ENCODE measurements at regions of chr1 and their contacts with region 1.

Region 1: GRCh38 chr1:114282751-114283403 is 129.2 kb upstream of the SYT6 start:
- DNase-seq: peak; percentile 92
- ATAC-seq: peak; percentile 98
- H3K4me3 Mint-ChIP-seq: no peak overlapping the region
- H3K27ac Mint-ChIP-seq: no peak overlapping the region
- H3K4me1 Mint-ChIP-seq: peaks cover 11% of the 10 kb centered on the region
- H3K27me3 Mint-ChIP-seq: no peaks in the 10 kb centered on the region
- CTCF ChIP-seq: peak; percentile 83

Region 2: GRCh38 chr1:113804421-113805255 is 478.2 kb before region 1 on chr1:
- CTCF ChIA-PET with region 1: no interaction called
- POLR2A ChIA-PET with region 1: no interaction called
- intact Hi-C with region 1: no loop called
- DNase-seq: no peak
- ATAC-seq: peak; percentile 58
- H3K4me3 Mint-ChIP-seq: no peak overlapping the region
- H3K27ac Mint-ChIP-seq: no peak overlapping the region
- H3K4me1 Mint-ChIP-seq: peaks cover 78% of the 10 kb centered on the region
- H3K27me3 Mint-ChIP-seq: no peaks in the 10 kb centered on the region
- CTCF ChIP-seq: no peak

Region 3: DNA sequence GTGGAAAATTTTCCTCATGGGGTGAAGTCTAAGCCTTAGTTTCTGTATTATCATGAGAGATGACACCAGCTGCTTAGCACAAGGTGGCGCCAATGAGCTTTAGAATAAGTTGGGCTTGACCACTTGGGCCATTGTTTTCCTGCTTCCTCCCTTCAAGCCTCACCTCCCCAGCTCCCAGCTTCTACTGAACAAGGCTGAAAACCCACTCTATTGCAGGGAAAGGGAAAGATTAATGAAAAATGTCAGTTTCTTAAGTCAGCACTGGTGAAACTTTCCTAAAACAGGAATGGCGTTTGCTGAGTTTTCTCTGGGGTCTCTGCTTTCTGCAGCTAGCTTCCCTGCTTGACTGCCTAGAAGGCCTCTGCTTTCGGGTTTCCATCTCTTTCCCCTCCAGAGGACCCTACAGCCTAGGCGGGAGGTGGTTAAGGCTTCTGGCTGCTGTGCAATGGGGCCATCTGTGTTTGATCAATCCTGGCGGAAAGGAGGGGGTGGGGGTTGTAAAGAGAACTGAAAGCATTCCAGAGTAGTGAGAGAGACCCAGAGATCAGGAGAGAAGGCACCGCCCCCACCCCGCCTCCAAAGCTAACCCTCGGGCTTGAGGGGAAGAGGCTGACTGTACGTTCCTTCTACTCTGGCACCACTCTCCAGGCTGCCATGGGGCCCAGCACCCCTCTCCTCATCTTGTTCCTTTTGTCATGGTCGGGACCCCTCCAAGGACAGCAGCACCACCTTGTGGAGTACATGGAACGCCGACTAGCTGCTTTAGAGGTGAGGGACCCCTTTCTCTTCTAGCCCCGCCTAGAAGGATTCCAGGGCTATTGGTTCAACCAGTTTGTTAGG is 303.8 kb before region 1 on chr1 and contains the start of gene OLFML3:
- CTCF ChIA-PET with region 1: interaction called, 44 read pairs
- POLR2A ChIA-PET with region 1: no interaction called
- intact Hi-C with region 1: loop called (anchors 2 kb)
- DNase-seq: peak; percentile 82
- ATAC-seq: peak; percentile 22
- H3K4me3 Mint-ChIP-seq: no peak within 1 kb of the TSS
- H3K27ac Mint-ChIP-seq: no peak within 1 kb of the TSS
- H3K4me1 Mint-ChIP-seq: peaks cover 44% of the 10 kb centered on the region
- H3K27me3 Mint-ChIP-seq: no peaks in the 10 kb centered on the region
- CTCF ChIP-seq: peak; percentile 84
- total RNA-seq, gene OLFML3: 0.14 to 0.49 TPM

Region 4: DNA sequence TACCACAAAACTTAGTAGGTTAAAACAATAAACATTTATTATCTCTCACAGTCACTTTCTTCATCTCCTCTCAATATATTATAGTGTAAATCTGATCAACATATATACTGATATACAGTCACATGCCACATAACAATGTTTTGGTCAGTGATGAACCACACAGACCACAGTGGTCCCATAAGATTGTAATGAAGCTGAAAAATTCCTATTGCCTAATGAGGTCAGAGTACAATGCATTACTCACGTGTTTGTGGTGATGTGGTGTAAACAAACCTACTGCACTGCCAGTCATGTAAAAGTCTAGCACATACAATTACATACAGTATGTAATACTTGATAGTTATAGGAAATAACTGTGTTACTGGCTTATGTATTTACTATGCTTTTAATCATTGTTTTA is 273.5 kb before region 1 on chr1:
- CTCF ChIA-PET with region 1: interaction called, 13 read pairs
- POLR2A ChIA-PET with region 1: no interaction called
- intact Hi-C with region 1: no loop called
- DNase-seq: no peak
- ATAC-seq: no peak
- H3K4me3 Mint-ChIP-seq: no peak overlapping the region
- H3K27ac Mint-ChIP-seq: no peak overlapping the region
- H3K4me1 Mint-ChIP-seq: no peaks in the 10 kb centered on the region
- H3K27me3 Mint-ChIP-seq: no peaks in the 10 kb centered on the region
- CTCF ChIP-seq: no peak

Region 5: GRCh38 chr1:114234408-114235124 is 48.3 kb before region 1 on chr1:
- CTCF ChIA-PET with region 1: interaction called, 13 read pairs
- POLR2A ChIA-PET with region 1: no interaction called
- intact Hi-C with region 1: no loop called
- DNase-seq: no peak
- ATAC-seq: no peak
- H3K4me3 Mint-ChIP-seq: no peak overlapping the region
- H3K27ac Mint-ChIP-seq: no peak overlapping the region
- H3K4me1 Mint-ChIP-seq: peaks cover 8% of the 10 kb centered on the region
- H3K27me3 Mint-ChIP-seq: no peaks in the 10 kb centered on the region
- CTCF ChIP-seq: no peak

Region 6: GRCh38 chr1:114299331-114299975 is 16.6 kb after region 1 on chr1:
- CTCF ChIA-PET with region 1: interaction called, 12 read pairs
- POLR2A ChIA-PET with region 1: no interaction called
- intact Hi-C with region 1: no loop called
- DNase-seq: no peak
- ATAC-seq: no peak
- H3K4me3 Mint-ChIP-seq: no peak overlapping the region
- H3K27ac Mint-ChIP-seq: no peak overlapping the region
- H3K4me1 Mint-ChIP-seq: peaks cover 5% of the 10 kb centered on the region
- H3K27me3 Mint-ChIP-seq: no peaks in the 10 kb centered on the region
- CTCF ChIP-seq: no peak

Region 7: GRCh38 chr1:114330451-114330983 is 47.6 kb after region 1 on chr1:
- CTCF ChIA-PET with region 1: interaction called, 13 read pairs
- POLR2A ChIA-PET with region 1: no interaction called
- intact Hi-C with region 1: no loop called
- DNase-seq: peak; percentile 37
- ATAC-seq: peak; percentile 73
- H3K4me3 Mint-ChIP-seq: no peak overlapping the region
- H3K27ac Mint-ChIP-seq: peak overlapping the region; percentile 1
- H3K4me1 Mint-ChIP-seq: peaks cover 59% of the 10 kb centered on the region
- H3K27me3 Mint-ChIP-seq: no peaks in the 10 kb centered on the region
- CTCF ChIP-seq: no peak

Region 8: DNA sequence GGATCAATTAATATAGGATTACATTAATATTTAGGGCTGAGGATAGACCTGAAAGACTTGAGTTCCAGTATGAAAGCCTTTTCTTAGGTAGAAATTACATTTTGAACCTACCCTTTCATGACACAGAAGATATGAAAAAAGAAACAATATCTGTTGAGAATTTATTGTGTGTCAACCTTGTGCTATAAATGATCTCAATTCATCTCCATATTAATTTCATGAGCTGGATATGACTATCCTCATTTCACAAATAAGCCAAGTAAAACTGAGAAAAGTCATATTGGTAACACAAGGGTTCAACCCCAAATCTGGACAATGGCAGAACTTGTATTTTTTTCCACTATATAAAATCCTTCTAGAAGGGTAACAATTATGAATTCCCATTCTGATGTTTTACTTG is 108.1 kb after region 1 on chr1:
- CTCF ChIA-PET with region 1: no interaction called
- POLR2A ChIA-PET with region 1: no interaction called
- intact Hi-C with region 1: no loop called
- DNase-seq: no peak
- ATAC-seq: no peak
- H3K4me3 Mint-ChIP-seq: no peak overlapping the region
- H3K27ac Mint-ChIP-seq: no peak overlapping the region
- H3K4me1 Mint-ChIP-seq: no peaks in the 10 kb centered on the region
- H3K27me3 Mint-ChIP-seq: no peaks in the 10 kb centered on the region
- CTCF ChIP-seq: no peak

Region 9: DNA sequence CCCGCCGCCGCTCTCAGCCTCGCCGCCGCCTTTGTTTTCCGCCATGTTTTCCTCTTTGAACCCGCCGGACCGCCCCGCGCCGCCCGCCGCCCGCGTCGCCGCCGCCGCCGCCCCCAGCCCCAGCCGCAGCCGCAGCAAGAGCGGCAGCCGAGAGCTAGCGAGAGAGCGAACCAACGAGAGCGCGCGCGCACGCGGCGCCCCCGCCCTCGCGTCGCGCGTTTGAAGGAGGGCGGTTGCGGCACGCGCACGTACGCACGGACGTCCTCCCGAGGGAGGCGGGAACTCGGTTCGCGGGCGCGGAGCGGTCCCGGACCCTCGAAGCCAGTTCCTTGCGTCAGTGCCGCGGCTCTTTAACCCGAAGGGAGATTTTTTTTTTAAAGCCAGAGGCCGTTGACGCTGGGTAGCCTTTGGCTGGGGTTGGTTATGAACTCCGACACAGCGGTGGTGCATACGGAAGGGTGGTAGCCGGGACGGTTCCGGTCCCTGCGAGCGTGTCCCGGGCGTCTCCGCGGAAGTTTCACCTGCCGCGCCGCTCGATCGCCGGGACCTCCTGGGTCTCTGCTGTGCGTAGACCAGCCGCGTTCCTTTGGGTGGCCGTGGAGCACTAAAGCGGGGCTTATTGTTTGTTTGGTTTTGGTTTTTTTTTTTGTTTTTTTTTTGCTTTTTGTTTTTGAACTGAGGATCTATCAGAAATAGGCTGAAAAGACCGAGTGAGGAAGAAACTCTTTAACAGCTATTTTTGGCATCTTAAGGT is 228.3 kb after region 1 on chr1 and contains the start of gene TRIM33:
- CTCF ChIA-PET with region 1: no interaction called
- POLR2A ChIA-PET with region 1: no interaction called
- intact Hi-C with region 1: no loop called
- DNase-seq: peak; percentile 92
- ATAC-seq: peak; percentile 82
- H3K4me3 Mint-ChIP-seq: peak within 1 kb of the TSS; percentile 97
- H3K27ac Mint-ChIP-seq: peak within 1 kb of the TSS; percentile 98
- H3K4me1 Mint-ChIP-seq: peaks cover 39% of the 10 kb centered on the region
- H3K27me3 Mint-ChIP-seq: no peaks in the 10 kb centered on the region
- CTCF ChIP-seq: no peak
- total RNA-seq, gene TRIM33: 34.2 to 35.6 TPM

Region 10: GRCh38 chr1:114531094-114531493 is 248.2 kb after region 1 on chr1:
- CTCF ChIA-PET with region 1: no interaction called
- POLR2A ChIA-PET with region 1: no interaction called
- intact Hi-C with region 1: no loop called
- DNase-seq: peak; percentile 32
- ATAC-seq: peak; percentile 20
- H3K4me3 Mint-ChIP-seq: no peak overlapping the region
- H3K27ac Mint-ChIP-seq: no peak overlapping the region
- H3K4me1 Mint-ChIP-seq: peaks cover 5% of the 10 kb centered on the region
- H3K27me3 Mint-ChIP-seq: no peaks in the 10 kb centered on the region
- CTCF ChIP-seq: no peak

Measured in activated CD8-positive, alpha-beta T cell treated with anti-CD3 and anti-CD28 coated beads for 36 hours (primary cell).